GM13977 (cell line): ENCODE measurements at regions of chr1 and their contacts with region 1.

Region 1: DNA sequence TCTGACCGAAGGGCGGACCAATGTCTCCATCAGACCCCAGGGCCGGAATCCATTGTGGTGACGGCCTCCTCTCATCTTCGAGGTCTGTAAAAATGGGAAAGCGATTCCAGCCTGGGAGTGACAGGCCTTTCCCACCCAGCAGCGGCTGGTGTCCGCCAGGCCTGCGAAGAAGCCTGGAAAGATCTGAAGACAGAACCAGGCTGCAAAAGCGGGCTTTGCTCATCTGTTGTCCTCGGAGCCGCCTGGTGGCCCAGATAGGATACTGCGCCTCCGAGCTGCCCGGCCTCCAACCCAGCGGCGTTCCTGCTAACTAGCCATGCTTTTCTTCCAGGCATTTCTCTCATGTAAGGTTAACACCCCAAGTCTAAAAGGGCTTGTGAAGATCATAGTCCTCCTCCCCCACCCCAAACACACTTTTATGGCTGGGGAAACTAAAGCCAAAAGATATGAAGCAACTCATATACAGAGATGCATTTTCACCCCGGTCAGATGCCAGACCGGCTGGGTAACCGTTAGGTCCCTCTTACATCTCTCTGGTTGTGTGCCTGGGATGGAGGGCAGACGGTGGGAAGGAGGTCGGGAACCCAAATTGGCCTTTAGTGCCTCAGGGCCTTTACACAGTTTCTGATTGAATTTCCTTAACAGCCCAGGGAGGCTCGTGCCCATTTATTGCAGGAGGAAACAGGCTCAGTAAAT is 1.9 kb upstream of the DHRS3 start:
- DNase-seq: peak; percentile 86
- CTCF ChIP-seq: peak; percentile 98

Region 2: GRCh38 chr1:12124693-12125421 is 495.1 kb before region 1 on chr1:
- in situ Hi-C with region 1: loop called (anchors 25 kb)
- DNase-seq: peak; percentile 67
- CTCF ChIP-seq: peak; percentile 92

Region 3: DNA sequence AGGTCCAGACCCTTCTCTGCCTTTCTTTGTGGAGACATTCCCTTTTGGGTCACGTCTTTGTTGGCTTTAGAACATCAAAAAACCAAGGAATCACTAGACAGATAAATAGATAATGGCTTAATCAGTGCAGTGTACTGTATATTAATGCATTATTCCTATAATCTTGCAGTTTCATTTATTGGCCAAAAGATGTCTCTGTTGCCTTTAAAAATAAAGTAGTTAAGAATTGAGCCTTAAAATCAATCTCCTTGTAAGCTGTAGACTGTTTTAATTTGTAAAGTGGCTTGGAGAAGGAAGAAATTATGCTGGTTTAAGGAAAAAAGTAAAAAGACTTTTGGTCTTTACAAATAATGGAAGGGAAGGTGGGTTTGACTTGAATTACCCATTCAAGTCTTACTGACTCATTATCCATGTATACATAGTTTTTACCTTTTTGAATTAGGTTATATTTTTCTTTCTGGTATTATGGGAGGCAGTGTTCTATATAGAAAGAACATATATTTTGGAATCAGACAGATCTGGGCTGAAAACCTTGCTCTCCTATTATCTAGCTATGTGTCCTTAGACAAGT is 305.5 kb before region 1 on chr1:
- in situ Hi-C with region 1: loop called (anchors 25 kb)
- DNase-seq: peak; percentile 32
- CTCF ChIP-seq: peak; percentile 52